Mammary epithelial cell (primary cell): ENCODE measurements at regions of chr1 and their contacts with region 1.

Region 1: DNA sequence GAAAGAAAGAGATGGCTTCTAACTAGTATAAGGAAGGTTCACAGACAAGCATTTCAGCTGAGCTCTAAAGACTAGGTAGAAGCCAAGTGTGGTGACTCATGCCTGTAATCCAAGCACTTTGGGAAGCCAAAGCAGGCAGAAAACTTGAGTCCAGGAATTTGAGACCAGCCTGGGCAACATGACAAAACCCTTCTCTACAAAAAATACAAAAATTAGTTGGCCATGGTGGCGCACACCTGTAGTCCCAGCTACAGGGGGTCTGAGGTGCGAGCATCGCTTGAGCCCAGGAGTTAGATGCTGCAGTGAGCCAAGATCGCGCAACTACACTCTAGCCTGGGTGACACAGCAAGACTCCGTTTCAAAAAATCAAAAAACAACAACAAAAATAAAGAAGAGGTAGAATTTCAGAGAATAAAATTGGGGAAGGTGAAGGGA is 27.8 kb downstream of the FBXO42 start:
- DNase-seq: peak; percentile 68
- H3K4me3 ChIP-seq: no peak overlapping the region
- H3K27ac ChIP-seq: no peak overlapping the region
- H3K4me1 ChIP-seq: peaks cover 22% of the 10 kb centered on the region
- H3K27me3 ChIP-seq: no peaks in the 10 kb centered on the region
- CTCF ChIP-seq: no peak

Region 2: DNA sequence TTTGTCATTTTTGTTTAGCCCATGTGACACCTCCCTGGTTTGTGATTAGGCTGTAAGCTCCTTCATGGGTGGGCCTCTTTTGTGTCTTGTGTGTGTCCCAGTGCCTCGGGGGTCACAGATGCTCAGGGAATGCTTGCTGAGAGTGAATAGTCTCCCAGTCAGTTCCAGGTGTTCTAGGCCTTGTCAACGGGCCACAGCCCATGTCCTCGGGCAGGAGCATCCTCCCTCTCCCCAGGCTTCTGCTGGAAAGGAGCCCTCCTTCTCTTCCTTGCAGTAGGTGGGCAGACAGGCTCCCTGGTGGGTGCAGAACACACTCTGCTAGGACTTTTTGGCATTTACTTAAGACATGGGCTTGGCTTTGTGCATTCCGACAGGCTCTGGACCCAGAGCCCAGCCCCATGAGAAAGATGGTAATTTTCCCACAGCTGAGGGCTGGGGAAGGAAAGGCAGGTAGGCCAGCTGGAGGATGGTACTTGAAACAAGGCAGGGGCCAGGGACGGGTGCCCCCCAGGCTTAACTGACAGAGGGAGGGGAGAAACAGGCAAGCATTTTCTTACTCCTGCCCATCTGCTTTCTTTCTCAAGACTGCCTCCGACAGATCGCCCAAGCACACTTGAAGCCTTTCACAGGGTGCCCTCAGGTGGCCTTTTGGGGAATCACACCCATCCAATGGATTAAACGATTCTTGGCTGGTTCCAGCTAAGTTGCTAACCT is 80.4 kb before region 1 on chr1:
- CTCF ChIA-PET with region 1: interaction called, 13 read pairs
- dilution Hi-C with region 1: no loop called
- in situ Hi-C with region 1: no loop called
- intact Hi-C with region 1: no loop called
- DNase-seq: peak; percentile 66
- H3K4me3 ChIP-seq: no peak overlapping the region
- H3K27ac ChIP-seq: no peak overlapping the region
- H3K4me1 ChIP-seq: peaks cover 12% of the 10 kb centered on the region
- H3K27me3 ChIP-seq: no peaks in the 10 kb centered on the region
- CTCF ChIP-seq: peak; percentile 86

Region 3: GRCh38 chr1:16300436-16300835 is 24.0 kb before region 1 on chr1:
- CTCF ChIA-PET with region 1: no interaction called
- dilution Hi-C with region 1: no loop called
- in situ Hi-C with region 1: no loop called
- intact Hi-C with region 1: loop called (anchors 2 kb)
- DNase-seq: peak; percentile 96
- H3K4me3 ChIP-seq: no peak overlapping the region
- H3K27ac ChIP-seq: peak overlapping the region; percentile 59
- H3K4me1 ChIP-seq: peaks cover 18% of the 10 kb centered on the region
- H3K27me3 ChIP-seq: no peaks in the 10 kb centered on the region
- CTCF ChIP-seq: no peak

Region 4: DNA sequence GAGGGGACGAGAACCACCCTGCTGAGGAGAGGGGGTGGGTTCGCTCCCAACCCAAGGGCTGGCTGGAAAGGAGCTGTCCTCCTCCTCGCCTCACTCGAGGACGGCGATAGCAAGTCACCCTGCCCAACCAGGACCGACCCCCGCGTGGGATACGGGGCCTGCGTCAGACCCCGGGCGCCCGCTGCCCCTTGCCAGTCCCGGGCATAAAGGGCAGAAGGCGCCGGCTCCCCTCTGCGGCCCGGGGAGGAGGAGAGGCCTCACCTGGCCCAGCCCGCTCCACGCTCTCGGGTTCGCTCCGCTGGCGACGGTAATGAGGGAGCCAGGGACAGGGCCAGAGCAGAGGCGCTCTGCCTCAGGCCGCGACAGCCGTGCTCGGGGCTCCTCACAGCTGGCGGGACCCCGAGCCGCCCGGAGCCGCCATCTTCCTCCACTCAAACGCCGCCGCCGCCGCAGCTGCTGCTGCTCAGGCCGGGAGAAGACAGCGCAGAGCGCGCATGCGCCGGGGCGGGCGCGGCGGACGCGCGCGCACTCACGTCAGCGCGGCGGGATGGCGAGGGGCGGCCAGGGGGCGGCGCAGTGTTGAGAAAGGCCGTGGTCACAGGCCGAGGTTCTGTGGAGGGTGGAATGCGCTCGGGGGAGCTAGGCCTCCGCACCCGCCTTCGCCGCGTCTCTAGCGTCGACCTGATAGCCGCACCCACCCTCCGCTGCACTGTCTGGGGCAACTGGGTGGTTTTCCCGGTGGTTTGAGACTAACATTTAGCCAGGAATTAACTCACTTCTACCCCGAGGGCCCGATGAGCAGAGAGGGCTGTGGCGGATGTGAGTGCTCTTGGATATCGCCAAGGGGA is 27.7 kb after region 1 on chr1 and contains the start of gene FBXO42:
- CTCF ChIA-PET with region 1: no interaction called
- dilution Hi-C with region 1: no loop called
- in situ Hi-C with region 1: no loop called
- intact Hi-C with region 1: loop called (anchors 1 kb)
- DNase-seq: peak; percentile 88
- H3K4me3 ChIP-seq: peak within 1 kb of the TSS; percentile 80 to 99 (median 83)
- H3K27ac ChIP-seq: peak within 1 kb of the TSS; percentile 74
- H3K4me1 ChIP-seq: peaks cover 16% of the 10 kb centered on the region
- H3K27me3 ChIP-seq: no peaks in the 10 kb centered on the region
- CTCF ChIP-seq: peak; percentile 9 to 32
- total RNA-seq, gene FBXO42: 19.8 to 21.4 TPM